Activated CD8-positive, alpha-beta T cell treated with anti-CD3 and anti-CD28 coated beads, Interleukin-2, amount 10 ng/mL, durations not matched to agents 7 days and 5 days (primary cell): ENCODE measurements at regions of chr11 and their contacts with region 1.

Region 1: GRCh38 chr11:447923-448731 is 2.0 kb upstream of the PTDSS2 start:
- DNase-seq: peak; percentile 97
- ATAC-seq: peak; percentile 77
- H3K4me3 Mint-ChIP-seq: peak overlapping the region; percentile 83
- H3K27ac Mint-ChIP-seq: peak overlapping the region; percentile 97
- H3K4me1 Mint-ChIP-seq: peaks cover 28% of the 10 kb centered on the region
- H3K27me3 Mint-ChIP-seq: peaks cover 8% of the 10 kb centered on the region

Region 2: DNA sequence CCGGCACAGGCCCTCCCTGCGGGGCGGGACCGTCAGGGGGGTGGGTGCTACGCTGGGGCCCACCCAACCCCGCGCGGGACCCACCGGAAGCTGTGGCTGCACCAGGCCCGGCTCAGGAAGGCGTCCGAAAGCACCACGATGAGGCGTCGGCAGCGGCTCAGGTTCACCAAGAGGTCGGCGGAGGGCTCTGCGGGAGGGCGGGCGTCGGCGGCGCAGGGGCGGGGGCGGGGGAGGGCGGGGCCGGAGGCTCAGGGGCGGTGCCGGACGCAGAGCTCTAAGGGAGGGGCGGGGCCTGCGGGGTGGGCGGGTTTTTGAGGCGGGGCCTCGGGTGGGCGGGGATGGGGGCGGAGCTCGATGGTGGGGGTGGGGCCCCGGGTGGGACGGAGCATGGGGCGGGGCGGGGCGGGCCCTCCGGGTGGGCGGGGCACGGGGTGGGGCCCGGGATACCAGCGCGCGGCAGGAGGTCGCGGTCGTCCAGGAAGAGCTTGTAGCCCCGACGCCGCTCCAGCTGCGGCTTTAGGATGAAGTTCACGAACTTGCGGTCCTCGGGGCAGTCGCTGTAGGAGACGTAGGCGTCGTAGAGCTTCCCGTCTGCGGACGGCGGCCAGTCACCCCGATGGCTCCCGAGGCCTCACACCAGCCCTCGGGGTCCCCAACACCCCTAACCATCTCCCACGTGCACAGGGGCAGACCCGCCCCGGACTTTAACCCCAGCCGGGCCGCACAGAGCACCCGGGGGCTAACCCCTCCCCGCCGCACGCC is 41.0 kb before region 1 on chr11:
- CTCF ChIA-PET with region 1: interaction called, 60 read pairs
- POLR2A ChIA-PET with region 1: interaction called, 10 read pairs
- DNase-seq: peak; percentile 96
- ATAC-seq: peak; percentile 92
- H3K4me3 Mint-ChIP-seq: no peak overlapping the region
- H3K27ac Mint-ChIP-seq: peak overlapping the region; percentile 43
- H3K4me1 Mint-ChIP-seq: peaks cover 16% of the 10 kb centered on the region
- H3K27me3 Mint-ChIP-seq: no peaks in the 10 kb centered on the region

Region 3: DNA sequence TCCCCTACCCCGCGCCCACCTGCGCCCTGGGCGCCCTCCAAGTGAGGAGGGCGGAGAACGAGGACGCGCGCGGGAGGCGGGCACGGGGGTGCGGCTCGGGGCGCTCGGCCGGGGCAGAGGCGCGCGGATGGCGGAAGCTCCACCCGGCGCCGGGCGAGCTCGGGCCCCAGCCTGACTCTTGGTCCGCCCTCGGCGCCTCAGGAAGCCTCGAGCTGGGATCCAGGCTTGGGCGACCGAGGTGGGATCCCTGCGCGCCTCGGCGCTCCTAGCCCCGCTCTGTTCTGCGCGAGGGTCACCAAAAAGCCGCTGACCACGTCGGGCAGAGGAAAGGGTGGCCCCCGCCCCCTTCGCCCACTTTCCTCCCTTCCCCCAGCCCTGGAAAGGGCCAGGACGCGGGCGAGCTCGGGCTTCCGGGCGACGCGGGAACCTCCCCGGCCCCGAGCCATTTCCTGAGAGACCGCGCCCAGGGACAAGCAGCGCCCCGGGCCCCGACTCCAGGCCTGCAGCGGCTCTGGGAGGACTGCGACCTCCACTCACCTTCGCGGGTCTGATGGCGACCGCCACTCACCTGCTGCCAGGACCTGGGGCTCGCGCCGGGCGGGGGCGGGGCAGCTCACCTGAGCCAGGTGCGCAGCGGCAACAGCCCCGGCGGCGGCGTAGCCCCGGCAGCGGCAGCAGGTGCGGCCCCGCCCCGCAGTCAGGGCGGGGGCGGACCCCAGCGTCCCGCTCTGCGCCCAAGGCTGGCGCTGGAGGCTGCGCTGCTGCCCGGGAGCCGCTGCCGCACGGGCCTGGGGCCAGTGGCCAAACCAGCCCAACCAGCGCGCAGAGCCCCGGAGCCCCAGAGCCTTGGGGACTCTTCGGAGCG is 31.1 kb before region 1 on chr11:
- CTCF ChIA-PET with region 1: interaction called, 60 read pairs
- POLR2A ChIA-PET with region 1: interaction called, 59 read pairs
- DNase-seq: peak; percentile 69
- ATAC-seq: peak; percentile 58
- H3K4me3 Mint-ChIP-seq: peak overlapping the region; percentile 97
- H3K27ac Mint-ChIP-seq: peak overlapping the region; percentile 93
- H3K4me1 Mint-ChIP-seq: peaks cover 30% of the 10 kb centered on the region
- H3K27me3 Mint-ChIP-seq: no peaks in the 10 kb centered on the region

Region 4: GRCh38 chr11:506238-506994 is 58.3 kb after region 1 on chr11:
- CTCF ChIA-PET with region 1: interaction called, 15 read pairs
- POLR2A ChIA-PET with region 1: interaction called, 8 read pairs
- DNase-seq: peak; percentile 98
- ATAC-seq: peak; percentile 81
- H3K4me3 Mint-ChIP-seq: peak overlapping the region; percentile 96
- H3K27ac Mint-ChIP-seq: peak overlapping the region; percentile 99
- H3K4me1 Mint-ChIP-seq: peaks cover 29% of the 10 kb centered on the region
- H3K27me3 Mint-ChIP-seq: no peaks in the 10 kb centered on the region

Region 5: DNA sequence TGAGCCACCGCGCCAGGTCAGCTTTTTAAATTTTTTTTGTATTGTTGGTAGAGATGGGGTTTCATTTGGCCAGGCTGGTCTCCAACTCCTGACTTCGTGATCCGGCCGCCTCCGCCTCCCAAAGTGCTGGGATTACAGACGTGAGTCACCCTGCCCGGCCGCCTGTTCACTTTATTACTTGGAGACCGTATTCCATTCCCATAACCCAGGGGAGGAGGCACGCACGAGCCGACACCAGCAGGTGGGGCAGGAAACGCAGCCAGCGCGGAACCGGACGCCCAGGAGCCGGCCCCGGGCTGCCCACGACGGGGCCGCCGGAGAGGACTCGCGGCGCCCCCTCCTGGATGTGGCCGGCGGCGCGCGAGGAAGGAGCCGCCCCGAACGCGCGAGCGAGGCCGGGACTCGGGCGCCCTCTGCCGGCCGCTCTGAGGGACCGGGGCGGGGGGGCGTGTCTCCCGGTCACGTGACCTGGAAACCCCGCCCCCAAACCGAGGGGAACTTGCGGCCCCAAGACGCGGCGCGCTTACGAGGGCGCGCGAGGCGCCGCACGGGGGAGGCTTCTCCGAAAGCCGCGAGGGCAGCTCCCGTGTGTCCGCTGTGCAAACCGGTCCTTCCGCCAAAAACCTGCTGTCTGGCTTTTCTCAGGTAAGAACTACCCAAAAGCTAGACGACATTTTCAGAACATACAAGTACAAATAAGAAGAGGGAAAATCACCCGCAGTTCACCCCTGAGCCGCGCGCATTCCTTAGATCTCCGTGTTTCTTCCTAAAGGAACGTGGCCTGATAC is 70.5 kb after region 1 on chr11:
- CTCF ChIA-PET with region 1: interaction called, 20 read pairs
- POLR2A ChIA-PET with region 1: no interaction called
- DNase-seq: peak; percentile 90
- ATAC-seq: peak; percentile 93
- H3K4me3 Mint-ChIP-seq: peak overlapping the region; percentile 65
- H3K27ac Mint-ChIP-seq: peak overlapping the region; percentile 69
- H3K4me1 Mint-ChIP-seq: peaks cover 10% of the 10 kb centered on the region
- H3K27me3 Mint-ChIP-seq: no peaks in the 10 kb centered on the region